Activated B cell treated with CpG ODN at 0.5 μM for 24 hours (primary cell): ENCODE measurements at regions of chr2 and their contacts with region 1.

Region 1: GRCh38 chr2:168443818-168444217 is 12.3 kb upstream of the CERS6 start:
- DNase-seq: no peak
- ATAC-seq: peak; percentile 34
- H3K4me3 Mint-ChIP-seq: no peak overlapping the region
- H3K27ac Mint-ChIP-seq: no peak overlapping the region
- H3K4me1 Mint-ChIP-seq: no peaks in the 10 kb centered on the region
- H3K27me3 Mint-ChIP-seq: no peaks in the 10 kb centered on the region
- CTCF ChIP-seq: no peak

Region 2: GRCh38 chr2:168652997-168653921 is 209.4 kb after region 1 on chr2:
- CTCF ChIA-PET with region 1: no interaction called
- POLR2A ChIA-PET with region 1: no interaction called
- intact Hi-C with region 1: no loop called
- DNase-seq: no peak
- ATAC-seq: no peak
- H3K4me3 Mint-ChIP-seq: no peak overlapping the region
- H3K27ac Mint-ChIP-seq: no peak overlapping the region
- H3K4me1 Mint-ChIP-seq: peaks cover 6% of the 10 kb centered on the region
- H3K27me3 Mint-ChIP-seq: no peaks in the 10 kb centered on the region
- CTCF ChIP-seq: no peak

Region 3: GRCh38 chr2:168687314-168687713 is 243.5 kb after region 1 on chr2:
- CTCF ChIA-PET with region 1: interaction called, 3 read pairs
- POLR2A ChIA-PET with region 1: no interaction called
- intact Hi-C with region 1: loop called (anchors 5 kb)
- DNase-seq: no peak
- ATAC-seq: no peak
- H3K4me3 Mint-ChIP-seq: no peak overlapping the region
- H3K27ac Mint-ChIP-seq: no peak overlapping the region
- H3K4me1 Mint-ChIP-seq: no peaks in the 10 kb centered on the region
- H3K27me3 Mint-ChIP-seq: no peaks in the 10 kb centered on the region
- CTCF ChIP-seq: no peak

Region 4: DNA sequence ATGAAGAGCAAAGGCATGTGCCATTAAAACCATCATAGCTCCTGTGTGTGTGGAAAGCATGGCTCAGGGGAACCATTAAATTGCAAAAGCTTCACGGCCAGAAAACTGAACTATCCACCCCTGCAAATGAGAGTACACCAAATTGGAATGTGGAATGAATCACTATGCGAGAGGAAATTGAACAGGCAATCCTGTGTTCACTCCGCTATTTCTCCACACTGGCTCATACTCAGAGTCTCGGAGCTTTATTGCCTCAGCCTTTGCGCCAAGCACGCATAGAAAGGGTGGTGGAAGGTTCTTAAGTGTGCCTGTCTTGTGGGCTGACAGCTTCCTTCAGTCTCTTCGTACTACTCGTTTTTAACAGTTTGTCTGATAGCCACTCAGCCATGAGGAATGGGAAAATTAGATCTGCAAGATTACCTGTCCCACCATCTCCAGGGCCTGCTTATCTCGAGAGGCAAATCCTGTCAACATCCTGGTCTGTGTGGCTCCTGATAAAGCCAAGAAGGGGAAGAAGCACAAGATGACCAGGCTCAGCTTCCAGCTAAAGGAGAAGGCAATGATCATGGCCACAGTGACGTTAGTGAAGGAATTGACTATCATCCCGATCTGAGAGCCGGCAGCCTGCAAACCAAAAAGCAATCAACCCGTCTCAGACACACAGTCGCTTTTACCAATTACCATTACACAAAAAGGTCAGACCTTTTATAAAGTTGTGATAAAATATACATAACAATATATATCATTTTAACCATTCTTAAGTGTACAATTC is 492.2 kb after region 1 on chr2:
- CTCF ChIA-PET with region 1: no interaction called
- POLR2A ChIA-PET with region 1: no interaction called
- intact Hi-C with region 1: no loop called
- DNase-seq: no peak
- ATAC-seq: no peak
- H3K4me3 Mint-ChIP-seq: no peak overlapping the region
- H3K27ac Mint-ChIP-seq: no peak overlapping the region
- H3K4me1 Mint-ChIP-seq: no peaks in the 10 kb centered on the region
- H3K27me3 Mint-ChIP-seq: no peaks in the 10 kb centered on the region
- CTCF ChIP-seq: no peak